G401 (cell line): ENCODE measurements at regions of chr3 and their contacts with region 1.

Region 1: DNA sequence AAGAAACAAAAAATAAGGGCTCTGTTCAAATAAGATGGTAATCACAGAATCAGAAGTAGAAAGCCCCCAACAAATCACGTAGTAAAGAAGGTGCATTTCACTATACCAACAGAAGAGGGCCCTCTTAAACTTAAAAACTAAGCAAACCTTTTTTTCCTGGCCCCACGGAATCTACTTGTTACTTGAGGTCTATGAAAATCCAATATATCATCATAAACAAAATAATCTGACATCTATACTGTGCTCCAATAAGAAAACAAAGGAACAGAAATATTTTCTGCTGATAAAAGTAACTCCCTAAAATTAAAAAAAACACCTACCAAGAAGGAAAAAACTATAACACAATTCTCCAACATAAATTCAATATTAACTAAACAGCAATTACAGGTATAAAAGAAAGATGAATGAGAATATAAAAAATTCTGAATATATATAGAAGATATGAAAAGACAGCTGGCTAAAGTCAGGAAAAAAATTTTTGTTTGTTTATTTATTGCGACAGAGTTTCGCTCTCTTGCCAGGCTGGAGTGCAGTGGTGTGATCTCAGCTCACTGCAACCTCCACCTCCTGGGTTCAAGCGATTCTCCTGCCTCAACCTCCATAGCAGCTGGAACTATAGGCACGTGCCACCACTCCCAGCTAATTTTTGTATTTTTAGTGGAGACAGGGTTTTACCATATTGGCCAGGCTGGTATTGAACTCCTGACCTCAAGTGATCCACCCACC is 81.8 kb downstream of the CLASP2 start:
- DNase-seq: peak; percentile 72

Region 2: DNA sequence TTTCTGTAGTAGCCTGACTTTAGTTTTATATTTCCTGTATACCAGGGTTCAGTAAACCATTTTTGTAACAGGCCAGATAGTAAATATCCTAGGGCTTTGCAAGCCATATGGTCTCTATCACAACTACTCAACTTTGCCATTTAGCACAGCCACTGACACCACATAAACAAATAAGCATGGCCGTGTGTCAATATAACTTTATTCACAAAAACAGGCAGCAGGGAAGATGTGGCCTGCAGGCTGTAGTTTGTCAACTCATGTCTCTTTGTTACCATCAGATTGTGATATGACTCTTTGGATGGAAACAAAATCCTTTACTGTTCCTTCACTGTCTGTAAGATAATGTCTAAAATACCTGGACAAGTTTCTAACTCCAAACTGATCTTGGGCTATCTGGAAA is 72.8 kb before region 1 on chr3:
- in situ Hi-C with region 1: no loop called
- DNase-seq: no peak

Region 3: DNA sequence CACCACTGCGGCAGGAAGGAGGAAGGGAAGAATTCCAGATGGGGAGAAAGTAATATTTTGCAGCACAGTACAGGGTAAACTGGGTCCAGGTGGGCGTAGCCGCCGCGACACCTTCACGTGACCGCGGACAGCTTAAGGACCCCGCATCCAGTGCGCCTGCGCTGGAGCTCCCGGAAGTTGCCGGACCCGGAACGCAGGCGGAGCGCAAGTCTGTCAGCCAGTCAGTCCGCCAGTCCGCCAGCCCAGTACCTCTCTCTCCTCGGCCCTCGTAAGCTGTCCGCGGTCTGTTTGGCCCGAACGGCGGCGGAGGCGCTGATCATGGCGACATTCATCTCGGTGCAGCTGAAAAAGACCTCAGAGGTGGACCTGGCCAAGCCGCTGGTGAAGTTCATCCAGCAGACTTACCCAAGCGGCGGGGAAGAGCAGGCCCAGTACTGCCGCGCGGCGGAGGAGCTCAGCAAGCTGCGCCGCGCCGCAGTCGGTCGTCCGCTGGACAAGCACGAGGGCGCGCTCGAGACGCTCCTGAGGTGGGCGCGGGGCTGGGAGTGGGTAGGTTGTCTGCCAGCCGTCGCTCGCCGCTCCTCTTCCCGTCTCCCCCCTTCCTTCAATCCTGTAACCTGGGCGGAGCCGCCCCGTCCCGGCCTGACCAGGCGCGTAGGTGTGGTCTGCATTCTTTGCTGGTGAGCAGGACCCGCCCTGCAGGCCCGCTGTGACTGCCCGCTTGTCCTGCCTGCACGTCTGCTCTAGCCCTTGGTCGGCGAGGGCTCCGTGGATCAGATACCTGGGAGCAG is 162.3 kb after region 1 on chr3 and contains the start of gene PDCD6IP:
- in situ Hi-C with region 1: loop called (anchors 25 kb)
- DNase-seq: peak; percentile 88
- total RNA-seq, gene PDCD6IP: 54.3 and 85.6 TPM in 2 replicates